ENCODE measurements at regions of chr14 and their contacts with region 1.

Region 1: DNA sequence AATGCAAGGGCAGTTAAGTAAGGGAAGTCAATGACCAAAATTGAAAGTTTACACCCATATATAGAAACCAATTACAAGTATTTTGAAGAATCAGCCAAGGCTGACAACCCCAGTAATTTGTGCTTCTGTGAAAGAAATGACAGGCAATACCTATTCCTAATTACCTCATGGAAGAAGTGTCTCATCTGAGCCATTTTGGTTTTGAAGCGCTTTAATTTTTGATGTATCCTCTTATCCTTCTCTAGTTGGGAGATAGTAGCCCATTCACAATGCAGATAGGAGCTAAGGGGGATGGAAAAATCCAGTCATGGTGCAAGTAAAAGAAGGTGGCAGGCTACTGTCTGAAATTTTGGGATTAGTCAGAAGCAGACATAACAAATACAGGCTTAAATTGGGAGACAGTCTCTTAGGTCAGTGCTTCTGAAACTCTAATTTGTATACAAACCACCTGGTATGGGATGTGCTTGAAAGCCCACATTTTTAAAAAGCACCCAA is 30.4 kb upstream of the SUPT16H start:
- DNase-seq: peak; percentile 52
- CTCF ChIP-seq: no peak

Region 2: DNA sequence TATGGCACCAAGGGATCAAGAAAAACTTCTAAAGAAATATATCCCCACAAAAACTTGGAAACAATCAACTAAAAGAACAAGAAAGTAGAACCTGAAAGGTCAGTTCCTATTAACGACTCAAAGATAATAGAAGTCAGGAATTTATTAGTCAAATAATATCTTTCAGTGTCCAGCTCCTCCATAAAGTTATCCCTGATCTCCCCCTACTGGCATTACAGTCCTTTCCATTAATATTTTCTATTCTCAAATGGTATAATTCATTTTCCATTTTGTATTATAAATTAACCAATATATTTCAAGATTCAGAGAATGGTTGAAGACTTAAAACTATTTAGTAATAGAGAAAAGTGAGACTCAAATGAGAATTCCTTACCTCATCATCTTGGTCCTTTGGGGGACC is 18.7 kb before region 1 on chr14:
- CTCF ChIA-PET with region 1: interaction called, 14 read pairs
- POLR2A ChIA-PET with region 1: no interaction called
- DNase-seq: no peak
- CTCF ChIP-seq: no peak

Measured in GM10248 (cell line).